ENCODE measurements at regions of chr1 and their contacts with region 1.

Region 1: DNA sequence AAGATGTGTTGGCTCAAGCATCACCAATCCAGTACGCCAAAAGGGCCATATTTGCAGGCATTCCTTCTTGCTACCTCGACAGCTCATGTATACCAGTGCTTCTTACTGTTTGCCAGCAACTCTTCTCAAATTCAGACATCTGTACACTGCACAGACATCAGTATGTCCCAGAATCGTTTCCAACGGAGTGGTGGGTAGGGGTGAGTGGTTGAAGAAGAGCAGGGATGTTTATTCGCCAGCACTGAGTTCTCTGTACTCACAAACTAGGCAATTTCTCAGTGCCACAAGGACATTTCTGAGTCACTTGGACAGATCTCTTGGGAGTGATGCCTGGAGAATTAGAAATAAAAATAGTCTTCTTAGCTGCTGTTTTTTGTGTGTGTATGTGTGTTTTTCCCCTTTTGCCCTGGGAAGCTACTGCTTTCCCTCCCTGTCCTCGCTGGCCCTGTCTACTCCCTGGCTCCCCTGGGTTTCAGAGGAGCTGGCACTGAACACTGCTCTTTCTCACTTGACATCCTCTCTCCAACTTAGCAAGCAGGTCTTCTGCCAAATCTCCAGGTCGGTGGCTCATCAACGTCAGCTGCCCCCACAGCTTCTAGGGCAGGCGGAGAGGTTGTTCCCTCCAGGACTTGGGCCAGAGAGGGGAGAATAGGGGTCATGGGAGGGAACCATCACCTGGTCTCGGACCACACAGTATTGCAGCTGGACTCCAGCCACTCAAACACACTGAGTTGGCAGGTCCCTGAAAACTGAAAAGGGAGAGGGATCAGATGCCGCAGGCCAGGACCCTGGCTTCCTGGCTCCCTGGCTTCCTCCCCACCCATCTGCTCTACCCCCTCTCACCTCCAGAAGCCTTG is 90.5 kb downstream of the NMNAT2 start:
- DNase-seq: peak; percentile 46 to 49
- ATAC-seq: peak; percentile 54 to 82 (median 78)
- H3K4me3 ChIP-seq: no peak overlapping the region
- H3K27ac ChIP-seq: peak overlapping the region in 7 of 10 donors; percentile 8 to 61 (median 23)
- H3K4me1 ChIP-seq: peaks cover 5 to 19% (median 13%) of the 10 kb centered on the region in 9 donors
- H3K27me3 ChIP-seq: peaks cover 0 to 23% (median 0%) of the 10 kb centered on the region in 7 donors
- CTCF ChIP-seq: no peak

Region 2: DNA sequence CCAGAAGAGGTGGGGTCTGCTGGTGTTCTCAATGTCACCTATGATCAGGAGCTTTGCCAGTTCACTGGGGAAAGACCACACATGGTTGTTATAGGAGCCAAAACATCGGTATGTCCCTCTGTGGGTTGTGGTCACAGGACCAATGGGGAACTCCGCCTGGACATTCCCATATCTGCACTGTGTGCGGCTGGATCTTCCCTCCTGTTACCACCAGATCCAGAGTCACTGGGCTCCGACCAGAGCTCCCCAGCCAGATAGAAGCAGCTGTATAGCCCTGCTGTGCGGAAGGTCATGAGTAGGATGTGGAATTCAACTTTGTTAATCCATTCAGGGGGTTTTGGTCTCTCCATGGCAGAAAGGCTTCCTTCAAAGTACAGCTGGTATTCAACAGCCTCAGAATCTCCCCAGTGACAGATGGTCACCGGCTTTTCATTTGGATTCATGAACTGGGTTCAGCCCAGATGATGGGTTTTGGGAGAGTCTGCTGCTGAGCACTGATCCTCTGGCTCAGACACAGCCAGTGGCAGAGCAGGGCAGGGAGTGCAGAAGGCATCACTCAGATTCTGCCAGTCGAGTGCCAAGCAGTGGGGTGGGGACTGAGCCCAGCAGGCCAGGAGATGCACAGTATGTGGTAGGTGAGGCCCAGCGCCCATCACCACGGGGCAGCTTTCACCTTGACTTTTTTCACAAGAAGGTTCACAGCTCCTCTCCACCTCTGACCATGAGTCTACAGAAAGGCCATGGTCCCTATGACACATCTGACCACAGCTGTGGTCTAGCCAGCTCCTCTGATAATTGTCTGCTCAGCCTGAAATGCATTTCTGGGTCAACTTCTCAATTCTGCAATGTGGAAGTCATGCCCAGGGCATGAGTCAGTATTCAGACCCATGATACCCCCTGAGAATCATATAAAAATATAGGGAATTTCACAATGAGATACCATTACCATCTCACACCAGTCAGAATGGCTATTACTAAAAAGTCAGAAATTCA is 371.8 kb before region 1 on chr1:
- intact Hi-C with region 1: loop called in 1 of 10 experiments (anchors 10 kb)
- DNase-seq: no peak
- ATAC-seq: peak in 5 of 8 donors; percentile 25 to 86 (median 37)
- H3K4me3 ChIP-seq: no peak overlapping the region
- H3K27ac ChIP-seq: no peak overlapping the region
- H3K4me1 ChIP-seq: peaks cover 0 to 14% (median 7%) of the 10 kb centered on the region in 9 donors
- H3K27me3 ChIP-seq: peaks cover 3 to 28% (median 17%) of the 10 kb centered on the region in 7 donors
- CTCF ChIP-seq: no peak

Region 3: DNA sequence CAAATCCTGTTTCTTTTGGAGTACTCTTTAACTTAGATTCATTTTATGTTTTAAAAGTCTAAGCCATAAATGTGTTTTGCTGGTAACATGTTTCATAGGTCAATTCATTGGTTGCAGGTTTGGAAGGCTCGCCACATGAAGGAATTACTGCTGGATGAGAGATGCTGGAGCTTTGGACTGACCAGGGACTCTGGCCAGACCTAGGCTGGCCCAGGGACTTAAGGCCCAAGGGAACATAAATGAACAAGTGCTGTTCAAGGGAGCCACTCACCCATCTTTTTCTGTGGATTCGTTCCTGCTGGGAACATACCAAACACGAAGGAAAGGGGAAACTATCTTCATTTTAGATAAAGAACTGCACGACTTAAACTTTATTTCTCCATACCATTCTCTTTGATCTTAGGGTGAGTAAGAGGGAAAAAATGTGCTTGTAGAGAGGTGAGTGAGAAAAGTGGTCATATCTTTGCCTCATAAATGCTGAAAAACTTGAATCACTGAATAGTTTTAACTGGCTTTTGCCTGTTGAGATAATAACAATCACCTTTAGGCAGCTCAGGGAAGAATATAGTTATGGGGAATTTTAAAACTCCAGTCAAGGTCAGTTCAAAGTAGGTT is 359.4 kb before region 1 on chr1:
- intact Hi-C with region 1: loop called in 1 of 10 experiments (anchors 5 kb)
- DNase-seq: no peak
- ATAC-seq: no peak
- H3K4me3 ChIP-seq: no peak overlapping the region
- H3K27ac ChIP-seq: no peak overlapping the region
- H3K4me1 ChIP-seq: peaks cover 0 to 8% (median 0%) of the 10 kb centered on the region in 9 donors
- H3K27me3 ChIP-seq: no peaks in the 10 kb centered on the region
- CTCF ChIP-seq: no peak

Region 4: GRCh38 chr1:183012301-183012994 is 315.2 kb before region 1 on chr1:
- intact Hi-C with region 1: no loop called
- DNase-seq: no peak
- ATAC-seq: no peak
- H3K4me3 ChIP-seq: no peak overlapping the region
- H3K27ac ChIP-seq: no peak overlapping the region
- H3K4me1 ChIP-seq: peaks cover 0 to 5% (median 0%) of the 10 kb centered on the region in 9 donors
- H3K27me3 ChIP-seq: no peaks in the 10 kb centered on the region
- CTCF ChIP-seq: no peak